Vagina (tissue), 2 donors: ENCODE measurements at regions of chr17 and their contacts with region 1.

Region 1: GRCh38 chr17:32783602-32784001 is 93.3 kb downstream of the MYO1D start:
- DNase-seq: no peak
- H3K4me3 ChIP-seq: no peak overlapping the region
- H3K27ac ChIP-seq: no peak overlapping the region
- H3K4me1 ChIP-seq: no peaks in the 10 kb centered on the region
- H3K27me3 ChIP-seq: no peaks in the 10 kb centered on the region
- CTCF ChIP-seq: peak; percentile 65 to 85 (median 73)
- POLR2A ChIP-seq: no peak

Region 2: DNA sequence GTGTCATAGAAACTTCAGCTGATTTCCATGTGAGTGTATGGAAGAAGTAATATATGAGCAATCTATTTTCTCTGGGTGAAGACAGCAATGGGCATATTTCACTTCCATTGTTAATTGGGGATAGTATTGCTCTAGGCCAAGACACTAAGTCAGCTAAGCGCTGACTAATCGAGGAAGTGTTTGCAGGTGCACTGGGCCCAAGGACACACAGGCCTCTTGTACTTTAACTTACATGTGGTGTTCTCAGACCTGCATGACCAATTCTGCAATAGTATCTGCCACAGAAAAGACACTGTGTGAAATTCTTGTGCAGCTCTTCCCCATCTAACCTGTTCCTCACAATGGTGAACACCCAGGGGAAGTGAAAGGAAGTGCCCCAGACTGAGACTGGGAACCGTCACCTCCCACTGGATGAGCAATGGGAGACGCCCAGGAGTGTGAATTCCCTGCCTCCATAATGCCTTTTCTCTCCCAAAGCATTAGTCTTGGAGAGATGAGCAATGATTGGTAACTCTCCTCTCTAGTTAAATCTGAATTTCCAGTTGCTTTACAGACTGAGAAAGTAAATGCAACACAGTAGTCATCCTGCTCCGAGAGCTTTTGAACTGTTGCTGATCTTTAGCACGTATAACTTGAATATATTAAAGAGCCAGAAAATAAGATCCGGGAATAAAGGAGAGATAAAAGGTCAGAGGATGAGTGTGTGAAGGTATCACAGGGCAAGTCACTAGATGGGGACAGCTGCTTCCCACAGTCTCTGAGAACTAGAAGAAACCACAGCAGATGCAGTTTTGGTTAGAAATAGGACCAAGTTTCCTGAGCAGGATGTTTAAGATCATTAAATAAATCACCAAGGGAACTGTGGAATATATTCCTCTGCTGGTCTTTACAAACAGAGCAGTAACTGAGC is 214.2 kb before region 1 on chr17:
- intact Hi-C with region 1: no loop called
- DNase-seq: no peak
- H3K4me3 ChIP-seq: no peak overlapping the region
- H3K27ac ChIP-seq: no peak overlapping the region
- H3K4me1 ChIP-seq: no peaks in the 10 kb centered on the region
- H3K27me3 ChIP-seq: no peaks in the 10 kb centered on the region
- CTCF ChIP-seq: no peak
- POLR2A ChIP-seq: no peak

Region 3: DNA sequence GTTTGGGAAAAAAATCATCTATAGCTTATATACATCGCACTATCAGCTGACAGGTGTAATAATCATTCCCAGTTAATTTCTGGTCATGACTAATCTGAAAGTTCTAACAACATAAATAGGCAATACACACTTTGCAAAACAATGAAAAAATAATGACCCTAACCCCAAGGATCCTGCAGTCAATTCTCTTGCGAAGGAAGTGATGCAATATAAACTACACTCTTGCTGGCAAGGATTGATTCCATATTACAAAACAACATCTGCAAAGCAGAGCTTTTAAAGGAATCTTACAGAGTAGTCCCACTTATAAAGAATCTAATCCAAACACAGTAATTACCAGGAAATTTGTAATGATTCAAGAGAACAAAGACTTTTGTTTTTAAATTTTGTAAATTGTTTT is 19.9 kb after region 1 on chr17:
- intact Hi-C with region 1: no loop called
- DNase-seq: no peak
- H3K4me3 ChIP-seq: no peak overlapping the region
- H3K27ac ChIP-seq: no peak overlapping the region
- H3K4me1 ChIP-seq: peaks cover 17% of the 10 kb centered on the region
- H3K27me3 ChIP-seq: no peaks in the 10 kb centered on the region
- CTCF ChIP-seq: no peak
- POLR2A ChIP-seq: no peak

Region 4: DNA sequence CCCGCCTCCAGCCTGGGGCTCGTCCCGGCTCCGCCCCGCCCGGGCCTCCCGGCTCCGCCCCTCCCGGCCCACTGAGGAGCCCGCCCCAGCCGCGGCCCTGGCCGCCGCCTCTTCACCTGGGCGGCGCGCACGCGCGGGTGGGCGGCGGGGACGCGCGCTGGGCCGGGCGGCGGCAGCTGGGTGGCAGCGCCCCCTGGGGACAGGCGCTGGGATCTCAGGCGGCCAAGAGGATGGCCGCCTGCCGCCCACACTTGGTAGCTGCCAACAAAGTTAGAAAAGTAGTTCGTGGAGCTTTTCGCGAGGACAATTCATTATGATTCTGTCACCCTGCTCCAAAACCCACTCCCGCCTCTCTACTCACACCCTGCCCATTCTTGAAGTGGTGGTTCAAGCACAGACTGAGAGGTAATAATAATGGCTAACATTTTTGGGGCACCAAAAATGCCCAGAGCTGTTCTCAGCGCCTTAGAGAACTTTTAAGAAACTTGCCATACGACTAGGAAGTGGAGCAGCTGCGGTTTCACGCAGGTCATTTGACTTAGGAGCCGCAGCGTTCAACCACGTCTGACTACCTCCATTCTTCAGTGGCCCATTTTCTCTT is 93.7 kb after region 1 on chr17:
- intact Hi-C with region 1: loop called (anchors 5 kb)
- DNase-seq: peak in 1 of 2 donors; percentile 89
- H3K4me3 ChIP-seq: peak overlapping the region; percentile 75 to 81
- H3K27ac ChIP-seq: peak overlapping the region; percentile 95
- H3K4me1 ChIP-seq: peaks cover 36% of the 10 kb centered on the region
- H3K27me3 ChIP-seq: no peaks in the 10 kb centered on the region
- CTCF ChIP-seq: peak; percentile 78 to 92 (median 80)
- POLR2A ChIP-seq: no peak

Region 5: DNA sequence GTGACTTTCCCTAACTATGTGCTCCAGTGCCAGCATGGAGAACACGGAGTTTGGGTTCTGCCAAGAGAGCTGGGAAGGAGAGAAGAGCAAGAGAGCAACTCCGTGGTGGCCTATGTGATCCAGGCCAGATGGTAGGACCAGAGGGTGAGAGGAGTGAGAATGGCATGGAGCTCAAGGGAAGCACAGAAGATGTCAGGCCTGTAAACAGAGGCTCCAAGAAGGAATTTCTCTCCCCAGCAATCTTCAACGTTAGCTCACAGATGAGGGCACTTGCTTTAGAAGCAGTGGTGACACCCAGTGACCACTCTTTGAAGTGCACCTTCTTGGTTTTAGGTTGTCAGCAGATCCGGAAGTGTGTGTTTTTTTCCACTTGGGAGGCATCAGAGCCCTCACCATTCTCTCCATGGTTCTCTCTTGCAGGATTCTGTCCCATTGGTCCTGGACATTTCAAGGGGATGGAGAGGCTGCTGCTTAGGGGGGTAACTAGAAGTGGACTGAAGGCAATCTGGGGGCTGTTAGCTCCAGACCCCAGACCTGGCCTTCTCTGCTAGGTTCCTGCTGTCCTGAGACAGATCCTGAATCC is 126.3 kb after region 1 on chr17:
- intact Hi-C with region 1: loop called (anchors 10 kb)
- DNase-seq: peak in 1 of 2 donors; percentile 86
- H3K4me3 ChIP-seq: no peak overlapping the region
- H3K27ac ChIP-seq: no peak overlapping the region
- H3K4me1 ChIP-seq: no peaks in the 10 kb centered on the region
- H3K27me3 ChIP-seq: no peaks in the 10 kb centered on the region
- CTCF ChIP-seq: peak; percentile 50 to 53 (median 53)
- POLR2A ChIP-seq: no peak